ENCODE measurements at regions of chr5 and their contacts with region 1.

Region 1: DNA sequence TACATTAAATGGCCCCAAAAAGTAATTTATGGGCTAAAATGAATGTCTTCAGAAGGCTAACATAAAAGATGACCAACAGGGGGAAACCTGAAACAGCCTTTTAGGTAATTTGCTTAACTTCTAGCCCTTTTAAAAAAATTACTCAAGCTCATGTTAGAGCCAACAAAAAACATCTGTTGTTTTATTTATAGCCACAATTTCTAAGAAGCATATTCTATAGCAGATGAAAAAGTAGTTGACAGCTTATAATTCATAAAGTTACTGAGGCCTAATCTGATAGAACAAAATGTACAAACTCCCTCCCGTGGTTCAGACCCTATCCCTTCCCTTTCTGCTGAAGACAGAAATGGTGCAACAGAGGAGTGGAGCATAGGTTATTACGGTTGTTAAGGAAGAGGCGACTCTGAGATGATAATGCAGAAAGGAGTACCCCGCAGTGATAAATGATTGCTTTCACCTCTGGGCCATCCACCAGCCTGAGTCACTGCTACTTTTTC is 46.1 kb downstream of the PIK3R1 start:
- DNase-seq: no peak
- ATAC-seq: peak in 2 of 3 donors; percentile 23 to 45
- H3K4me3 ChIP-seq: no peak overlapping the region
- H3K4me3 Mint-ChIP-seq: no peak overlapping the region
- H3K27ac ChIP-seq: peak overlapping the region; percentile 5
- H3K27ac Mint-ChIP-seq: peak overlapping the region; percentile 82 to 91
- H3K4me1 ChIP-seq: peaks cover 37% of the 10 kb centered on the region
- H3K4me1 Mint-ChIP-seq: peaks cover 83 to 88% of the 10 kb centered on the region in 2 donors
- H3K27me3 ChIP-seq: no peaks in the 10 kb centered on the region
- H3K27me3 Mint-ChIP-seq: no peaks in the 10 kb centered on the region
- CTCF ChIP-seq: no peak

Region 2: GRCh38 chr5:68239487-68239886 is 22.1 kb before region 1 on chr5:
- intact Hi-C with region 1: loop called (anchors 1 kb)
- DNase-seq: peak; percentile 78 to 92
- ATAC-seq: peak; percentile 92 to 98 (median 96)
- H3K4me3 ChIP-seq: no peak overlapping the region
- H3K4me3 Mint-ChIP-seq: peak overlapping the region; percentile 64
- H3K27ac ChIP-seq: peak overlapping the region; percentile 71
- H3K27ac Mint-ChIP-seq: peak overlapping the region; percentile 86 to 98
- H3K4me1 ChIP-seq: peaks cover 31% of the 10 kb centered on the region
- H3K4me1 Mint-ChIP-seq: peaks cover 77 to 79% of the 10 kb centered on the region in 2 donors
- H3K27me3 ChIP-seq: no peaks in the 10 kb centered on the region
- H3K27me3 Mint-ChIP-seq: no peaks in the 10 kb centered on the region
- CTCF ChIP-seq: no peak

Region 3: DNA sequence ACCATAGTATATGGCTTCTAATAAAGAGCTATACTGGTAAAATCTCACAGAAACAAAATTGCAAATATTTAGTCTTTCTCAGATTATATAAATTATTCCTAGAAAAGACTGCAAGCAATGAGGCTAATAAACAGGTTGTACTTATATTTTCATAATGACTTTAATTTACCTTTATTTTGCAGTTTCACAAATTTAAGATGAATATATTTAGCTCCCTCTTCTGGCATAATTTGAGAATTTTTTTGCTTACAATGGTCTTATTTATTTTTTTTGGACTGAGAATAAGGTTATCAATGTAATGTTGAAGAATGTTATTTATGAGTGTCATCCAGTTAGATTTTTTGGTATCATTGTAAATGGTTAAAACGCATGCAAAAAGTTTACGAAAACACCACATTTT is 10.7 kb after region 1 on chr5:
- intact Hi-C with region 1: loop called (anchors 2 kb)
- DNase-seq: peak in 1 of 2 donors; percentile 55
- ATAC-seq: no peak
- H3K4me3 ChIP-seq: no peak overlapping the region
- H3K4me3 Mint-ChIP-seq: no peak overlapping the region
- H3K27ac ChIP-seq: no peak overlapping the region
- H3K27ac Mint-ChIP-seq: peak overlapping the region; percentile 67 to 92
- H3K4me1 ChIP-seq: peaks cover 20% of the 10 kb centered on the region
- H3K4me1 Mint-ChIP-seq: peaks cover 74 to 76% of the 10 kb centered on the region in 2 donors
- H3K27me3 ChIP-seq: no peaks in the 10 kb centered on the region
- H3K27me3 Mint-ChIP-seq: no peaks in the 10 kb centered on the region
- CTCF ChIP-seq: peak; percentile 76

Region 4: DNA sequence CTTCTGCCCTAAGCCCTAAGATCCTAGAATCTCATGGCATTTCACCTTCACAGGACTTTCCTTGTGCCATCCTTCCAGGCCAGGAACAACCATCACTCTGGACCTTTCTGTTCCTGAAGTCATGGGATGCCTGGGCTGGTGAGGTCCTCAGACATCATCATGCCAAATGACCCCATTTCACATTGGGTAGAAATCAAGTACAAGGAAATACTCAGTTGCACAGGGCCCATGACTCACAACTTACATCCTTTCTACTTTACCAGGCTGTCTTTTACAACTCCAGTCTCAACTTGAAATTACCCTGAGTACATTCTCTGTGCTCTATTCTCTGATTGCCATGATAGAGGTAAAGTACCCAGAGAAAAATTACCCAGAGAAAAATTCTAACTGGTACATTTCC is 121.0 kb after region 1 on chr5:
- intact Hi-C with region 1: no loop called
- DNase-seq: peak in 1 of 2 donors; percentile 9
- ATAC-seq: peak; percentile 50 to 71 (median 59)
- H3K4me3 ChIP-seq: no peak overlapping the region
- H3K4me3 Mint-ChIP-seq: peak overlapping the region; percentile 70
- H3K27ac ChIP-seq: peak overlapping the region; percentile 57
- H3K27ac Mint-ChIP-seq: peak overlapping the region; percentile 88 to 91
- H3K4me1 ChIP-seq: peaks cover 39% of the 10 kb centered on the region
- H3K4me1 Mint-ChIP-seq: peaks cover 76 to 85% of the 10 kb centered on the region in 2 donors
- H3K27me3 ChIP-seq: no peaks in the 10 kb centered on the region
- H3K27me3 Mint-ChIP-seq: no peaks in the 10 kb centered on the region
- CTCF ChIP-seq: no peak

Region 5: GRCh38 chr5:68419637-68420452 is 158.2 kb after region 1 on chr5:
- intact Hi-C with region 1: no loop called
- DNase-seq: no peak
- ATAC-seq: no peak
- H3K4me3 ChIP-seq: no peak overlapping the region
- H3K4me3 Mint-ChIP-seq: no peak overlapping the region
- H3K27ac ChIP-seq: no peak overlapping the region
- H3K27ac Mint-ChIP-seq: no peak overlapping the region
- H3K4me1 ChIP-seq: peaks cover 3% of the 10 kb centered on the region
- H3K4me1 Mint-ChIP-seq: peaks cover 9 to 16% of the 10 kb centered on the region in 2 donors
- H3K27me3 ChIP-seq: no peaks in the 10 kb centered on the region
- H3K27me3 Mint-ChIP-seq: no peaks in the 10 kb centered on the region
- CTCF ChIP-seq: no peak

Region 6: DNA sequence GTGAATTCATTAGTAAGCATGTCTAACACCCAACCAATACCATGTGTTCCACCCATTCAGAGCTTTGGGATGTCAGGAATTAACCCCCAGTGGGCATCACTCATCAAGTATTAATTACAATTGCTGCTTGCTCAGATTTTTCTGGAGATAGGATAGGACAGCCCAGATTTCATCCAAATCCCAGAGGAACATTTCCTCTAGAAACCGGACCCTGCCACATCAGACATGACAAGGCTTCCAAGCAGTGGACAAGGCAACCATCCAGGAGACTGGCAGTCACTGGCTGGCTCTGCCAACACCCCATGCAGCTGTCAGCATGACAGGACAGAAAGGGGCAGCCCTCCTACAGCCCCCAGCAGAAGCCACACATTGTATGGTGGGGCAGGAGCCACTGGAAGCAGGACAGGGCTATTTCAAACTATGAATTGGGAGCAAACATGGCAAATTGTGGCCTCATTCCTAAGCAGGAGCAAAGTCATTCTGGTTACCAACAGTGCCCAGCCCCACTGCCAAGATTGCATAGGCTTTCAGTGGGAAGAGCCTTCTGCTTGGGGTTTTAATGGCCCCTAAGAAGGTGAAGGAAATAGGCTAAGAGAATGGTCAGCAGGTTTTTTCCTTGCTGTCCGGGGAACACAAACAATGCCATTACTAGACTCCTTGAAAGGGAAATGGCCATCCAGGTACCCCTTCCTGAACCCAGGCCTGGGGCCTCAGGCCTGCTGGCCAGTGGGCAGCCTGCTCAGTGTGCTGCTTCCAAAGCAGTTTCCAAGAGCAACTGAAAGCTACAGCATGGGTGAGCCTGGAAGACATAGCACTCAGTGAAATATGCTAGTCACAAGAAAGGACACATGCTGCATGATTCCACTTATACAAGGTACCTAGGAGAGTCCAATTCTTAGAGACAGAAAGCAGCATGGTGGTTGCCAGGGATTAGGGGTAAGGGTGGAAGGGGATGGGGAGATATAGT is 537.5 kb after region 1 on chr5:
- intact Hi-C with region 1: no loop called
- DNase-seq: no peak
- ATAC-seq: no peak
- H3K4me3 ChIP-seq: no peak overlapping the region
- H3K4me3 Mint-ChIP-seq: no peak overlapping the region
- H3K27ac ChIP-seq: no peak overlapping the region
- H3K27ac Mint-ChIP-seq: no peak overlapping the region
- H3K4me1 ChIP-seq: no peaks in the 10 kb centered on the region
- H3K4me1 Mint-ChIP-seq: no peaks in the 10 kb centered on the region
- H3K27me3 ChIP-seq: no peaks in the 10 kb centered on the region
- H3K27me3 Mint-ChIP-seq: peaks cover 0 to 6% of the 10 kb centered on the region in 2 donors
- CTCF ChIP-seq: no peak